K562 (cell line): ENCODE measurements at regions of chr3 and their contacts with region 1.

Region 1: GRCh38 chr3:11643605-11644087 is at the start of gene VGLL4:
- DNase-seq: peak; percentile 59 to 88 (median 72)
- ATAC-seq: peak; percentile 90
- H3K4me3 ChIP-seq: peak within 1 kb of the TSS; percentile 59
- H3K27ac ChIP-seq: peak within 1 kb of the TSS; percentile 77
- H3K4me1 ChIP-seq: peaks cover 4 to 15% of the 10 kb centered on the region in 2 experiments; a peak in 2 of 5 replicates
- H3K27me3 ChIP-seq: peaks cover 5 to 6% of the 10 kb centered on the region in 2 experiments; a peak in 3 of 5 replicates
- CTCF ChIP-seq: peak in 1 of 3 experiments; percentile 46; a peak in 3 of 6 replicates
- EP300 ChIP-seq: peak; percentile 24; the same call in 1 of the 2 replicates
- POLR2A ChIP-seq: peak; percentile 77
- RAD21 ChIP-seq: peak; percentile 37 to 69; a peak in 3 of 4 replicates
- polyA plus RNA-seq, gene VGLL4: 0.27 to 1.0 TPM

Region 2: DNA sequence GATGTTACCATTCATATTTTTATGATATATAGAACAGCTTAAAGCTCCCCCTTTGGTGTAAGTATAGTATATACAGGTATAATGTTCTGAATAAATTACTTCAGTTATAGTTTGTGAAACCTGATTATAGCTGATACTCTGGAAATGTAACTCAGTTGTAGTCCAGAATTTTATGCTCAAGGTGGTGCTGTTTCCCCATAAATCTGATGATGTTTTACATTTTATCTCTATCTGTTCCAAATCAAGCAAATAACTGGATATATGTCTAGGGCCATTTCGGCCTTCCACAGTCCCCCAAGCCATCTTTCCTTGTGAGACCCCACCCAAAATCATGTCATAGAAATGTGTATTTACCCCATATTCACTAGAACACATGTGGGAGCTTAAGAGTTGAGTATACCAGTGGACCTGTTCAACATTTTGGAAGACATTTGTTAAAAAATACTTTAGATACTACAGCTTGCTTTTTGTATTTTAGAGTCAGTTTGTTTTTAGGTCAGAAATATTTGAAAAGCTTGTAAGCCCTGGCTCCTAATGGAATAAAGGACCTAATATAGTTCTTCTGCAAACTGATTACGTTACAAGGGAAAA is 264.3 kb before region 1 on chr3:
- CTCF ChIA-PET with region 1: interaction called, 9 read pairs
- POLR2A ChIA-PET with region 1: no interaction called
- in situ Hi-C with region 1: no loop called
- intact Hi-C with region 1: loop called (anchors 2 kb)
- DNase-seq: peak in 2 of 4 experiments; percentile 19 to 29
- ATAC-seq: peak; percentile 74
- H3K4me3 ChIP-seq: no peak overlapping the region
- H3K27ac ChIP-seq: no peak overlapping the region
- H3K4me1 ChIP-seq: no peaks in the 10 kb centered on the region
- H3K27me3 ChIP-seq: no peaks in the 10 kb centered on the region
- CTCF ChIP-seq: peak; percentile 56 to 82 (median 59); a peak in 5 of 6 replicates
- EP300 ChIP-seq: no peak
- POLR2A ChIP-seq: no peak
- RAD21 ChIP-seq: peak; percentile 81 to 88

Region 3: DNA sequence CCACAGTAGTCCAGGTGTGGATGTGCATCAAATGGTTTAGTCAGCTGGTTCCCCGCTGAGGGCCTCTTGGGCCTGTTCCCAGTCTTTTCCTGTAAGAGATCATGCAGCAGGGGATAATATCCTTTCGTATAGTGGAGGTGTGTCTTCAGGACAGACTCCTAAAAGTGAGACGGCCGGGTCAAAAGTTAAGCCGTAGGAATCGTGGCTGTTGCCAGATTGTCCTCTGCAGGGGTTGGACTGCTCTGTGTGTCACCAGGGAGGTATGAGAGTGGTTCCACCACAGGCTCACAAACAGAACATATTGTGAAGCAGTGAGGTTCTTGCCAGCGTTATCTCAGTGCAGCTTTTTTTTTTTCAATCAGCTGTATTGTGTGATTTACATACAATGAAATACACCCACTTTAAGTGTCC is 94.9 kb before region 1 on chr3:
- CTCF ChIA-PET with region 1: no interaction called
- POLR2A ChIA-PET with region 1: no interaction called
- in situ Hi-C with region 1: no loop called
- intact Hi-C with region 1: no loop called
- DNase-seq: peak in 1 of 4 experiments; percentile 12
- ATAC-seq: peak; percentile 25; the same call in 1 of the 3 replicates
- H3K4me3 ChIP-seq: no peak overlapping the region
- H3K27ac ChIP-seq: no peak overlapping the region
- H3K4me1 ChIP-seq: peaks cover 0 to 14% of the 10 kb centered on the region in 2 experiments; a peak in 3 of 5 replicates
- H3K27me3 ChIP-seq: no peaks in the 10 kb centered on the region
- CTCF ChIP-seq: no peak
- EP300 ChIP-seq: no peak
- POLR2A ChIP-seq: no peak
- RAD21 ChIP-seq: no peak

Region 4: DNA sequence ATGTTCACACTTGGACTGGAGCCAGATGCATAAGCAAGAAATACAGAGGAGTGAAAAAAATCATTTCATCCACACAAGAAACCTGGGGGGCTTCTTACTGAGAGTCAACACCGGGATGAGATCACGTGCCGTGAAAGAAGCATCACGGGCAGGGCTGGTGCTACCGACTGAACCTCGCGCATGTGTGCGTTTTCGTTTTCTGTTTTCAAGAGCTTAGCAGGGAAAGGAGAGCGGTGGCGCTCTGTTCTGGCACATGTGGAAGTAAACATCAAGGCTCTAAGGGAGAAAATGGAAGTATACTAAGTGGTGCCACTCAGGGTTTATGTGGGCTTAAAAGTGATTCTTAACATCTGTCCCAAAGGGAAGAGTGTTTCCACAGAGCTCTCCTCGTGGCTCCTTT is 55.9 kb before region 1 on chr3:
- CTCF ChIA-PET with region 1: no interaction called
- POLR2A ChIA-PET with region 1: no interaction called
- in situ Hi-C with region 1: no loop called
- intact Hi-C with region 1: loop called (anchors 5 kb)
- DNase-seq: no peak
- ATAC-seq: no peak
- H3K4me3 ChIP-seq: no peak overlapping the region
- H3K27ac ChIP-seq: no peak overlapping the region
- H3K4me1 ChIP-seq: no peaks in the 10 kb centered on the region
- H3K27me3 ChIP-seq: peaks cover 0 to 12% of the 10 kb centered on the region in 2 experiments; a peak in 2 of 5 replicates
- CTCF ChIP-seq: no peak
- EP300 ChIP-seq: no peak
- POLR2A ChIP-seq: no peak
- RAD21 ChIP-seq: no peak

Region 5: DNA sequence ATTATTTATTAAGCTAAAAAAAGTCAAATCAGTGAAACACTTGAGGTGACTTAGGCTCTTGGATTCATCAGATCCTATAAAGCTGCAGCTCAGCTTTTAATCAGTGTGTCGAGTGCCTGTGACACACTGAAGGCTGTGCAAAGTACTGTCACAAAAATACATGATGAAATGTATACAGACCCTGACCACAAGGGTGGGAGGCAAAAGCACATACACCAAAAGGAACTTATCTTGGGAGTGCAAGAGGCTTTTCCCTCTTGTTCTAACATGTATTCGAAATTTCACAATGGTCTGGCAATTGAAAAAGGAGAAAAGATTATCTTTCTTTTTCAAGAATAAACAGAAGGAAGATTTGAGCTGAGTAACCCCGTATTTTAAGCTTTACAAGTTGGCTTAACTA is 35.8 kb before region 1 on chr3:
- CTCF ChIA-PET with region 1: no interaction called
- POLR2A ChIA-PET with region 1: interaction called, 3 read pairs
- in situ Hi-C with region 1: no loop called
- intact Hi-C with region 1: loop called (anchors 5 kb)
- DNase-seq: peak; percentile 31 to 61 (median 35)
- ATAC-seq: peak; percentile 76
- H3K4me3 ChIP-seq: no peak overlapping the region
- H3K27ac ChIP-seq: no peak overlapping the region; the same call in 2 of the 3 replicates
- H3K4me1 ChIP-seq: peaks cover 5 to 13% of the 10 kb centered on the region in 2 experiments; a peak in 4 of 5 replicates
- H3K27me3 ChIP-seq: peaks cover 0 to 19% of the 10 kb centered on the region in 2 experiments; a peak in 2 of 5 replicates
- CTCF ChIP-seq: no peak
- EP300 ChIP-seq: peak; percentile 51
- POLR2A ChIP-seq: no peak
- RAD21 ChIP-seq: no peak

Region 6: DNA sequence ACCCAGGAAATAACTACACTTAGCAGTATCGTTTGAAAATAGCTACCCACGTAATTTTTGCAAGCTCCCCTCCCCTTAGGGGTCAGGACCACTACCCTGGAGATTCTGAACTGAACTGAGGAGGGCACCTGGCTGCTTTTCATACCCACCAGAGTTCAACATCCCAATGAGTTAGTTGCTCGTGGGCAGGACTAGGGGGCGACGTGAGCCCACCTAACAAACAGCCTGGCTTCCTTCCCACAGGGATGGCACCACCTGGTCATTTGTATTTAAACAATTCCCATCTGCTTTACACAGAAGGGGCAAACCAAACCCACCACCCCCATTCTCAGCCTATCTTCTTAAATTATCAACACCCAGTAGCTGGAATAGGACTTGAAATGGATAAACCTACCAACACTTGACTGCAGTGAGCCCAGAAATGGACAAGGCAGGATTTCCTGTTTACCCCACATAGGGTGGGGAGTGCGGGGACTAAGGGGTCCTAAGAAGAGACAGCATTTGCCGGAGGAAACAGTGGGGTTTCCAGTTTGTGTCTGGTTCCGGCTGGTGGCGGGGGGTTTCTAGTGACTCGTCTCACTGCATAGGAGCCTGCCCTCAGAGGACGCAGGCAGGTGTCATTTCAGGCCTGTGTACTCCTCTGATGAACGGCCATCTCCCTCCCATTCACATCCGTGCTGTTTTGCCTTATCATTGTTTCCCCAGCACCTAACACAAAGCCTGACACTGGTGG is 11.7 kb after region 1 on chr3:
- CTCF ChIA-PET with region 1: no interaction called
- POLR2A ChIA-PET with region 1: no interaction called
- in situ Hi-C with region 1: no loop called
- intact Hi-C with region 1: no loop called
- DNase-seq: no peak
- ATAC-seq: peak; percentile 23; the same call in 2 of the 3 replicates
- H3K4me3 ChIP-seq: no peak overlapping the region
- H3K27ac ChIP-seq: no peak overlapping the region
- H3K4me1 ChIP-seq: no peaks in the 10 kb centered on the region
- H3K27me3 ChIP-seq: peaks cover 36 to 38% of the 10 kb centered on the region in 2 experiments
- CTCF ChIP-seq: peak; percentile 42 to 50 (median 44)
- EP300 ChIP-seq: no peak
- POLR2A ChIP-seq: no peak
- RAD21 ChIP-seq: peak in 1 of 2 experiments; percentile 56; a peak in 2 of 4 replicates